ENCODE measurements at regions of chr17 and their contacts with region 1.

Region 1: DNA sequence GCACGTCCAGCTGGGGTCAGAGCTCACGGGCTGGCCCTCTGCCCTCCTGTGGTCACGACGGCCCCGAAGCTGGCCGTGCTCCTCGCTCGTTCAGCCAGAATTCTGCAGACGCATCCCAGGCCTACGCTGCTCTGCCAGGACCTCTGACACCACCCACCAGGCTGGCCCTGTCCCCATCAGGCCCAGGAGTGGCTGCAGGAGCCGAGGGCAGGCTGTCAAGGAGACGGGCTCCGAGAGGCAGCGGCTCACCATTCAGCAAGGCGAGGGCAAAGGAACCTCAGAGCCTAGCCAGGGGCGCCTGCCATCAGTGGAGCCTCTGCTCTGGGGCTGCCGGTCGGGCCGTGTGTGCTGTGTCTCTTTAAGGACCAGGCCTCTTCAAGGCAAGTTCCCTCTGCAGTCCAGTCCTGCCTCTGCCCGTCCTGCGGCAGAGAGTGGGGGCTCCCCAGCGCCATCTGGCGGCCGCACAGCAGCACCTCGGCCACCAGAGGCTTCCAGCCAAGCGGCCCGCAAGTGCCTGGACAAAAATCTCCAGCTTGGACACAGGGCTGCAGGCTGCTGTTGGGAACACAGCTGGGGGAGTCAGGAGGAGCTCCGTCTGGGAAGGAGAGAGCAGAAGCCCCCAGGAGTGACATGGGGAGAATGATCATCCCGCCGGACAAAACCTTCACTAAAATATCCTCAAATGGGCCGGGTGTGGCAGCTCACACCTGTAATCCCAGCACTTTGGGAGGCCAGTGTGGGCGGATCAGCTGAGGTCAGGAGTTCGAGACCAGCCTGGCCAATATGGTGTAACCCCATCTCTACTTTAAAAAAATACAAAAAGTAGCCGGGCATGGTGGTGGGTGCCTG is 7.4 kb upstream of the ABR start:
- DNase-seq: peak; percentile 74
- H3K4me3 Mint-ChIP-seq: no peak overlapping the region
- H3K27ac Mint-ChIP-seq: no peak overlapping the region
- H3K4me1 Mint-ChIP-seq: peaks cover 25% of the 10 kb centered on the region
- H3K27me3 Mint-ChIP-seq: peaks cover 18% of the 10 kb centered on the region
- CTCF ChIP-seq: peak; percentile 95

Region 2: DNA sequence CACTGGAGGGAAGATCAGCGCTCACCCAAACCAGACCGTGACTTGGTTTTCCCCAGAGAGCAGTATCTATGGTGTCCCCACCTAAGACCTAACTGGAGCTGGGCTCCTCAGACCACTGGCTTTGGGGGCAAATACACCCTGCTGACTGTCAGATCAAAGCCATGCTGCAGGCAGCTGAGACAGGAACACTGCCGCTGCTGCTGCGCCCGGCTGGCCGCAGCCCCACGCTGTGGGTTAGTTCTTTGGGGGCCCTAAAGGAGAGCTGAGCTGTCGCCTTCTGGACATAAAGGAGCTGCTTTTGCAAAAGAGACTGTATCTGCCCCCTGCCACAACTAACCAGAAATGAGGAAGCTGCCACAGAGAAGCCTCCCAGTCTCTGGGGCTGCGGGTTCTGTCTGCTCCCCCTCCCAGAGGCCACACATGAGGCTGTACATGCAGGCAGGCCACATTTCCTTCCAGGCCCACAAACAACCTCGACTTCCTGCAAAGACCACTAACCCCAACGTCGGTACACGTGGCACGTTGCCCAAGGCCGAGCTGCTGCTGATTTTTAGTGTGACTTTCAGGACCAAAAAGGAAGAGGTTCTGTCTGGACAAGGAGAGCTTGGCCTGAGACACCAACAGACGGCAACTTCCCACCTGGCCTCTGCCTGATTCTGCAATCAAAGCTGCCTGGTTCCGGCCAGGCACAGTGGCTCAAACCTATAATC is 10.8 kb after region 1 on chr17:
- CTCF ChIA-PET with region 1: interaction called, 41 read pairs
- POLR2A ChIA-PET with region 1: no interaction called
- intact Hi-C with region 1: no loop called
- DNase-seq: no peak
- H3K4me3 Mint-ChIP-seq: no peak overlapping the region
- H3K27ac Mint-ChIP-seq: no peak overlapping the region
- H3K4me1 Mint-ChIP-seq: no peaks in the 10 kb centered on the region
- H3K27me3 Mint-ChIP-seq: no peaks in the 10 kb centered on the region
- CTCF ChIP-seq: no peak

Region 3: DNA sequence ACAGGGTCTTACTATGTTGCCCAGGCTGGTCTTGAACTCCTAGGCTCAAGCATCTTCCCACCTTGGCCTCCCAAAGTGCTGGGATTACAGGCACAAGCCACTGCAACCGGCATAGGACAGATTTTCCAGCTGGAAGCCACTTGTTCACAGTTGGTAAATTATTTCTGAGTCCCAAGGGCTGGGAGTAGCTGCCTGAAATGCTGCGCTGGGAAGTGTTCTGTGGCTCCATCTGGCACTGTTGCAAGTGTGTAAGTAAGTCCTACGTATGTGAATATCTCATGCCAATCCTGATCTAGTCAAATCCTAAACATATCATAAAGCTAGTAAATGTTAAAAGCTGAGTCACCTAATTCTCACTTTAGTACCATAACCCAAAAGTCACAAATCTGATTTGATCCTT is 164.8 kb after region 1 on chr17:
- CTCF ChIA-PET with region 1: no interaction called
- POLR2A ChIA-PET with region 1: no interaction called
- intact Hi-C with region 1: no loop called
- DNase-seq: no peak
- H3K4me3 Mint-ChIP-seq: no peak overlapping the region
- H3K27ac Mint-ChIP-seq: no peak overlapping the region
- H3K4me1 Mint-ChIP-seq: peaks cover 7% of the 10 kb centered on the region
- H3K27me3 Mint-ChIP-seq: no peaks in the 10 kb centered on the region
- CTCF ChIP-seq: no peak

Region 4: GRCh38 chr17:1379930-1380313 is 192.8 kb after region 1 on chr17:
- CTCF ChIA-PET with region 1: no interaction called
- POLR2A ChIA-PET with region 1: no interaction called
- intact Hi-C with region 1: no loop called
- DNase-seq: no peak
- H3K4me3 Mint-ChIP-seq: no peak overlapping the region
- H3K27ac Mint-ChIP-seq: peak overlapping the region; percentile 54
- H3K4me1 Mint-ChIP-seq: peaks cover 38% of the 10 kb centered on the region
- H3K27me3 Mint-ChIP-seq: no peaks in the 10 kb centered on the region
- CTCF ChIP-seq: no peak

Measured in MCF 10A (cell line).